ENCODE measurements at regions of chr10 and their contacts with region 1.

Region 1: GRCh38 chr10:102268375-102268888 is 23.1 kb downstream of the GBF1 start:
- DNase-seq: no peak
- ATAC-seq: peak; percentile 39
- H3K4me3 Mint-ChIP-seq: no peak overlapping the region
- H3K27ac Mint-ChIP-seq: peak overlapping the region; percentile 19
- H3K4me1 Mint-ChIP-seq: peaks cover 44% of the 10 kb centered on the region
- H3K27me3 Mint-ChIP-seq: no peaks in the 10 kb centered on the region

Region 2: GRCh38 chr10:102245101-102245931 is 23.1 kb before region 1 on chr10 and contains the start of gene GBF1:
- CTCF ChIA-PET with region 1: interaction called, 5 read pairs
- POLR2A ChIA-PET with region 1: interaction called, 14 read pairs
- DNase-seq: peak; percentile 95
- ATAC-seq: peak; percentile 90
- H3K4me3 Mint-ChIP-seq: peak within 1 kb of the TSS; percentile 99
- H3K27ac Mint-ChIP-seq: peak within 1 kb of the TSS; percentile 89
- H3K4me1 Mint-ChIP-seq: peaks cover 48% of the 10 kb centered on the region
- H3K27me3 Mint-ChIP-seq: peaks cover 14% of the 10 kb centered on the region
- total RNA-seq, gene GBF1: 39.8 to 42.9 TPM